ENCODE measurements at regions of chr9 and their contacts with region 1.

Region 1: DNA sequence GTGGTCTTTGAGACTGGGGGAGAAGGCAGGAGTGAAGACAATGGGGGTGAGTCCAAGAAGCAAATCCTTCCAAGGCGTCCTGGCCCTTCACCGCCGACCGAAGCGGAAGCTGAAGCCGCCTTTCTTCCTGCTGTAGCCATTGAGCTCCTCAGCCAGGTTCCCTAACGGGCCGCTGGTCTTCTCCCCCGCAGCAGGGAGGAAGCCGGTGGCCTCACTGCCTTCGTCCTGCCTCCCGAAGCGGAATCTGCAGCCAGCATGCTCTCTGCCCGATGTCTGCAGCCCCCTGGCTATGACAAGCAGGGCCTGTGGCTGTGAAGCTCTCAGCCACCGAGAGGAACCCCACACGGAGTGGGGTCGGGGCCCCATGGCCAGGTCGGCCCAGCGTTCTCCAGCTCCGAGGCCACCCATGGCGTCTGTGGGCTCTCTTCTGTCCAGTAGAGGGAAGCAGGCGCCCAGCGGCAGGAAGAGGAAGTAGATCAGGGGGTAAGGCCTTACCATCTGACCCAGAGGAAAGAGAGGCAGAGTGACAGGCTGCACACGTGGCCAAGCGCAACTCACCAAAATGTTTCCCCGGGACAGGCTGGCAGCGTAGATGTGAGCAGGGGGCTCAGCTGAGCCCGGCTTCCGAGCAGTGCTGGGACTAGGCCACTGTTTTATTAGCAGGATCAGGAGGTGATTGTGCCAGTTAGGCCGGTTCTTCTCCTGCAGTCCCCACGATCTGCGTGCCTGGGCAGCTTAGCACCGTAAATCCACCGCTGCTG is 3.1 kb downstream of the QRFP start:
- DNase-seq: no peak

Region 2: GRCh38 chr9:130997925-130998596 is 104.5 kb after region 1 on chr9:
- intact Hi-C with region 1: loop called in 1 of 2 experiments (anchors 10 kb)
- DNase-seq: peak; percentile 89